SK-N-SH (cell line): ENCODE measurements at regions of chr4 and their contacts with region 1.

Region 1: GRCh38 chr4:7802093-7802726 is 137.5 kb downstream of the AFAP1 start:
- DNase-seq: peak; percentile 80
- H3K4me3 ChIP-seq: no peak overlapping the region; a peak in 1 of 4 replicates
- H3K27ac ChIP-seq: peak overlapping the region; percentile 19 to 67
- H3K4me1 ChIP-seq: peaks cover 20 to 30% of the 10 kb centered on the region in 2 experiments
- H3K27me3 ChIP-seq: no peaks in the 10 kb centered on the region
- CTCF ChIP-seq: peak; percentile 89
- EP300 ChIP-seq: no peak
- RAD21 ChIP-seq: peak; percentile 94

Region 2: GRCh38 chr4:7781366-7781765 is 20.8 kb before region 1 on chr4:
- CTCF ChIA-PET with region 1: interaction called, 42 read pairs
- POLR2A ChIA-PET with region 1: no interaction called
- DNase-seq: no peak
- H3K4me3 ChIP-seq: no peak overlapping the region
- H3K27ac ChIP-seq: peak overlapping the region; percentile 53 to 86
- H3K4me1 ChIP-seq: peaks cover 39 to 64% of the 10 kb centered on the region in 2 experiments
- H3K27me3 ChIP-seq: no peaks in the 10 kb centered on the region
- CTCF ChIP-seq: no peak
- EP300 ChIP-seq: no peak
- RAD21 ChIP-seq: no peak

Region 3: DNA sequence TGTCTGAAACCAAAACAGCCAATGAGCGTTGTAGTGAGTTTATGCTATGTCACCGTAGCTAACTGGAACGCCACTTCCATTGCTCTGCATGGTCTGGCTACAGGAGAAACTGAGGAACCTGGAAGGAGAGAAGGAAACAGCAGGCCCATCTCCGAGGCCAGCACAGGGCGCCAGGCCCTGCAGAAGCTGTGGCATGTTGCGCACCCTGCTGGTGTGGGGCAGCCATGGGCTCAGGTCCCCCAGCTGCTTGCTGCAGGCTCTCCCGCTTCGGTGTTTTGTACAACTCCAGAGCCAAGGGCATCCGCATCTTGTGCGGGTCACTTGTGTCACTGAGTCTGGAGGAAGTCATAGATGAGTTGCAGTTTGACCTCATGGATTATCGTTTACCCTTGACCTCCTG is 48.3 kb after region 1 on chr4:
- CTCF ChIA-PET with region 1: interaction called, 73 read pairs
- POLR2A ChIA-PET with region 1: no interaction called
- DNase-seq: no peak
- H3K4me3 ChIP-seq: no peak overlapping the region
- H3K27ac ChIP-seq: peak overlapping the region in 1 of 2 experiments; percentile 47; a peak in 3 of 4 replicates
- H3K4me1 ChIP-seq: peaks cover 9 to 33% of the 10 kb centered on the region in 2 experiments; a peak in 3 of 4 replicates
- H3K27me3 ChIP-seq: no peaks in the 10 kb centered on the region
- CTCF ChIP-seq: peak; percentile 21
- EP300 ChIP-seq: no peak
- RAD21 ChIP-seq: peak; percentile 27

Region 4: DNA sequence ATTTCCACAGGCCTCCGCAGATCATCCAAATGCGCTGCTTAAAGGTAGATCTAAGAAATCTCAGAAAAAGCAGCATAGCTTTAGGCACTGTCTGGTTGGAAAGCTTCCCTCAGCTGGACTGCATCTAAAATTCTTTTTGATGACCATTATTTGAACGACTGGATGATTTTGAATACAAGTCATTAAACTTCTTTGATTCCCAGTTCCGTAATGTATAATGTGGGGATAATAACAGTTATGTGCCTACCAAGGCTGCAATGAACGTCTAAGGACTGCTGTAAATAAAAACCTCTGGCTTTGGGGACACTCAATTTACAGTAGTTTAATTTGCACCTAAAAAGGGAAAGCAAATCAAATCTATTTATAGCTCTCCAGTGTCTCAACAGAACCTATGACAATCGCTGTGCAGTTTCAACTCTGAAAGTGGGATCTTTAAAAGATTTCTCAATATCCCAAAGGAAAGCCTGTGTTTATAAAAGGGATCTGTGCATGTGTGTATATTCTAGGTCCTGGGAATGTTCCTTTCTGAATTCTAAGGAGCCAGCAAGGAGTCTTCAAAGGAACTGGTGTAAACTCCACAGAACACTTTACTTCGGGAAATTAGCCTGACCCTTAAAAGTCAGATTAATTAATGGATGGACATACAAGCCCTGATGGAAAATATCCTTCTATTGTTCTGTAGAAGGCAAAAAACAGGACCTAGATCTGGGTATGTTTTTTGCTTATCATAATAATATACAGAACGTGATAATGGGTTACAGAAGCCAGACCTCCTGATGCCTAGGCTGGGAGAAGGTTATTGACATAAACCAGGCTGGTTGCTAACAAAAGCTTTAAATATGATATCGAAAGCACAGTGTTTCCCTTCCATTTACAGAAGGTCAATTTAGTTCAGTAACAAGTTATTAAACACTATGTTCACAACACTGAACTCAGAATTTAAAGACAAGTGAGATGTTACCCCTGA is 84.1 kb after region 1 on chr4:
- CTCF ChIA-PET with region 1: interaction called, 10 read pairs
- POLR2A ChIA-PET with region 1: no interaction called
- DNase-seq: peak; percentile 74
- H3K4me3 ChIP-seq: no peak overlapping the region
- H3K27ac ChIP-seq: peak overlapping the region; percentile 97 to 100
- H3K4me1 ChIP-seq: peaks cover 33 to 53% of the 10 kb centered on the region in 2 experiments
- H3K27me3 ChIP-seq: no peaks in the 10 kb centered on the region
- CTCF ChIP-seq: no peak
- EP300 ChIP-seq: peak in 1 of 2 experiments; percentile 99; a peak in 2 of 4 replicates
- RAD21 ChIP-seq: peak; percentile 34

Region 5: DNA sequence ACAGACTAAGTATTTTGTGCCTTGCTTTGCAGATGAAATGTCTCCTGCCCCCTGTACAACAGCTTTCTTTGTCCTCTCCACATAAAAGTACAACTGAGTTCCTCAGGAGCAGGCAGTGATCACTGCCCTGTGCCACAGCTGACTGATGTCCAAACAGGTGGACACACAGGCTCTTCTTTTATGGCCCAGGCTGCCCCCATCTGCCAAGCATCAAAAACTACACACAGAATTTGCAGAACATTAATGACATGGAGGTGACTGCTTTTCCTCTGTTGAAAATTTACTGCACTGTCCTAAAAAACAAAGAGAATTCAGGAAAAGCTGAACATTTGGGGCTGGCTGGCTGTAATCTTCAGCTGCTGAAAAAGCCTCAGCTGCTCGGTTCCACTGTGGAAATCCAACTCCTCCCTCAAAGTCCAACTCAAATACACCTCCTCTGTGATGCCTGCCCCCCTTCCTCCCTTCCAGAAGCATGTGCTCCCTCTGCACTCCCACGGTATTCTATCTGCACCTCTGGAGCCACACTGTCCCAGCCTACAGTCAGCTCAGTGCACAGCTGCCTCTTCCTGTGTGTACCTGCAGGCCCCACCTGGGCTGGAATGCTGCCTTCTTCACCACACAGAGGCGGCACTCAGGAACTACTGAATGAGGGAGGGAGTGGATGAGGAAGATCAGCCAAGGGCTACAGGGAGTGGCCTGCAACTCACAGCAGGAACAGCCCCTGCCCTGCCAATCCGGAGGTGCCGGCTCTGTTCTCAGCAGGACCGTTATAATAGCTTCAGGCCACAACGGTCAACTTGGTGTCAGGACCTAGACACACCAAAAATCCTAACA is 127.1 kb after region 1 on chr4:
- CTCF ChIA-PET with region 1: interaction called, 231 read pairs
- POLR2A ChIA-PET with region 1: no interaction called
- DNase-seq: peak; percentile 66
- H3K4me3 ChIP-seq: no peak overlapping the region
- H3K27ac ChIP-seq: peak overlapping the region; percentile 23 to 66; a peak in 3 of 4 replicates
- H3K4me1 ChIP-seq: peaks cover 21 to 26% of the 10 kb centered on the region in 2 experiments; a peak in 3 of 4 replicates
- H3K27me3 ChIP-seq: no peaks in the 10 kb centered on the region
- CTCF ChIP-seq: peak; percentile 50
- EP300 ChIP-seq: no peak
- RAD21 ChIP-seq: peak; percentile 88

Region 6: GRCh38 chr4:7978489-7978888 is 176.3 kb after region 1 on chr4:
- CTCF ChIA-PET with region 1: interaction called, 209 read pairs
- POLR2A ChIA-PET with region 1: no interaction called
- DNase-seq: no peak
- H3K4me3 ChIP-seq: no peak overlapping the region
- H3K27ac ChIP-seq: no peak overlapping the region
- H3K4me1 ChIP-seq: peaks cover 0 to 11% of the 10 kb centered on the region in 2 experiments; a peak in 2 of 4 replicates
- H3K27me3 ChIP-seq: no peaks in the 10 kb centered on the region
- CTCF ChIP-seq: no peak
- EP300 ChIP-seq: no peak
- RAD21 ChIP-seq: no peak